ENCODE measurements at regions of chr5 and their contacts with region 1.

Region 1: DNA sequence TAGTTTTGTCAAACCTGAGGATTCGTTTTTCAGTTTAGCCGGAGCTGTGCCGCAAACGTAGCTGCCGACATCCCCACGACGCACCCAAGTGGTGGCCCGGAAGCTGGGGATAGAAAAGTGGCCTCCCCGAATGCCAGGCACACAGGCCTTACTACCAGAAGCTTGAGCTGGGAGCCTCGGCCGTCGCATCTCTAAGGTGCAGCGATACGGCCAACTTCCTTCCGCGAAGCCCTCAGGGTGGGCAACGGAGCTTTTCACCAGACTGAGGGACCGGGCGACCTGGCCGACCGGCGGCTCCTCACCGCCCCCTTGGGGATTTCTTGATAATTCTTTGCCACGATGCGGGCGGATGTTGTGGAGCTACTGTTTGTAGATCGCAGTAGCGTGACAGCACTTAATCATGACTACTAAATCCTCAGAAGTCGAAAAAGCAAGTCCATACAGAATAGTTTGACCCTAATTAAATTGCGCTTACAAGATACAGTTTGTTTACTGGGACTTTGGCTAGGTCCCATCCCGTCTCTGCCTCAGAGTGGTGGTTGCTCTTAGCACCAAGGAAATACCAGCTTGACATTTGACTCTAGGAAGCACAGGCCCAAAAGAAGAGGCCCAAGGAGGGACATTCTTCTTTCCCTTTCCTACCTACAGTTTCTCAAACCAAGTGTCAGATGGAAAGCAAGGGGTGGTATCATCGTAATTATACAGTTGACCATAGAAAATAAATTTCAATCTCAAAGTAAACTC is 613 bp upstream of the TMEM267 start:
- DNase-seq: peak; percentile 85 to 95
- H3K4me3 ChIP-seq: peak overlapping the region; percentile 69
- H3K27ac ChIP-seq: peak overlapping the region; percentile 86
- H3K4me1 ChIP-seq: peaks cover 21% of the 10 kb centered on the region
- H3K27me3 ChIP-seq: no peaks in the 10 kb centered on the region
- CTCF ChIP-seq: peak; percentile 97

Region 2: GRCh38 chr5:42908509-42909488 is 575.5 kb before region 1 on chr5:
- CTCF ChIA-PET with region 1: interaction called, 8 read pairs
- POLR2A ChIA-PET with region 1: interaction called, 3 read pairs
- intact Hi-C with region 1: loop called (anchors 5 kb)
- DNase-seq: peak; percentile 75 to 92
- H3K4me3 ChIP-seq: peak overlapping the region; percentile 28; the same call in 1 of the 2 replicates
- H3K27ac ChIP-seq: no peak overlapping the region
- H3K4me1 ChIP-seq: 0 out of 2 replicates have a peak, but pooled peaks cover 13% of the 10 kb centered on the region
- H3K27me3 ChIP-seq: peaks cover 10% of the 10 kb centered on the region; the same call in 1 of the 2 replicates
- CTCF ChIP-seq: peak; percentile 94

Region 3: DNA sequence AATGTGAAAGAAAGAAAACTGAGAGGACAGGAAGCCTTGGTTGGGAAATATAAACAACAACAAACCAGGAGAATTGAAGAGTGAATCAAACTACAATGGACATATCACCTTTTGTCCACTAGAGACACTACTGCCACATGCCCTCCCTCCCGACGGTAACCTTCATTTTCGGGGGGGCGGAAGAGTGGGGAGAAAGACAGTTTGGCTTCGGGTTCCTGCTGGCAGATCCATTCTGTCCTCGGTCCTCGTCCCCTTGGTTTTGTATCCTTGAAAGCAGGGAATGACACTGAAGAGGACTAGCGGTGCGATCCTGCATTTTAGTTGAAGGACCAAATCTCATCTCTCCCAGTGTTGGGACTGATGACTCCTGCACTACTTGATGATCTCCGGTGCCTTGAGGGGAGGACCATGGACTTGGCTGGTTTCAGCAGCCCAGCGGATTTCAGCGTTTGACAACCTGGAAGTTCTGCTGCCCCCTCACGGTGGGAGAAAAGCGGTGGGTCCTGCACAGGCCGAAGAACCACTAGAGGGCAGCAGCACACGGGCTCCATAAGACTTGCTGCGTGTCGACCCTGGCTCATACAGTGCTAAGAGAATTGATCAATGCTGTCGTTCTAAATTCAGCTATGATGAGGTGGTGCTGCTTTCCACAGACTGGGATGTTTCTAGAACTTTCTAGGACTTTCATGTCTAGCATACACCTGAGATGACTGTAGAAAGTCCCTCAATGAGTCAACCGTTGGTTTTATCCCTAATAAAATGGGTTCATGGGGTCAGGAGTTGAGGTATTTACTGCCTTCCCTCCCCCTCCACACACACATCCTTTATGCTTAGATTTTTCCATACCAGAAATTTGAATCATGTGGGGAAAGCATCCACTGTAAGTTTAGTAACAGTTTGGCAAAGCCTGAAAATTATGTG is 378.6 kb before region 1 on chr5:
- CTCF ChIA-PET with region 1: interaction called, 8 read pairs
- POLR2A ChIA-PET with region 1: no interaction called
- intact Hi-C with region 1: loop called (anchors 1 kb)
- DNase-seq: peak; percentile 90 to 96
- H3K4me3 ChIP-seq: peak overlapping the region; percentile 51
- H3K27ac ChIP-seq: no peak overlapping the region
- H3K4me1 ChIP-seq: peaks cover 8% of the 10 kb centered on the region; the same call in 1 of the 2 replicates
- H3K27me3 ChIP-seq: no peaks in the 10 kb centered on the region
- CTCF ChIP-seq: peak; percentile 100

Region 4: GRCh38 chr5:43305948-43306565 is 178.2 kb before region 1 on chr5:
- CTCF ChIA-PET with region 1: interaction called, 35 read pairs
- POLR2A ChIA-PET with region 1: interaction called, 7 read pairs
- intact Hi-C with region 1: no loop called
- DNase-seq: peak in 1 of 2 experiments; percentile 77
- H3K4me3 ChIP-seq: no peak overlapping the region
- H3K27ac ChIP-seq: no peak overlapping the region
- H3K4me1 ChIP-seq: peaks cover 34% of the 10 kb centered on the region
- H3K27me3 ChIP-seq: no peaks in the 10 kb centered on the region
- CTCF ChIP-seq: peak; percentile 95

Region 5: DNA sequence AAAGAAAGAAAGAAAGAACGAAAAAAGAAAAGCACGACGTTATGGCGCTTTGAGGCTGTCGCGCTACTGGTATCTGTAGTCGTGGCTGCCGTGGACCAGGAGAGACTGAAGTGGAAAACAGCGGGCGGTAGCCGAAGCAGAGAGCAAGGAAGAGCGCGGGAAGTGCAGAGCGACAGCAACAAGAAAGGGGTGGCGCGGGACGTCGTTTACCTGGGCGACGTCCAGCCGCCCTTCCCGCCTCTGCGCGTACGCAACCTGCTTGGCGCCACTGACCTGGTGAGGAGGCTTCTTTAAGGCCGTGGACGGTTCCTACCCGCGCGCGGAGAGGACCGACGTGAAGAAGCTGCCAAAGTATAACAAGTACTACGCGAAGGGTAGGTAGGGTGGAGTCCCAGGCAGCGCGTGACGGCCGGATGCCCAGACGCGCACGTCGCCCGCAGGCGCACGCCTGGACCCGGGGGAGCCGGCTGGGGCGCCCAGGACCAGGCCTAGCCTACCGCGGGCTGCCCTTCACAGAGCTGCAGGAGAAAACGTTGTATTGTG is 87.4 kb before region 1 on chr5:
- CTCF ChIA-PET with region 1: interaction called, 13 read pairs
- POLR2A ChIA-PET with region 1: no interaction called
- intact Hi-C with region 1: loop called (anchors 1 kb)
- DNase-seq: peak in 1 of 2 experiments; percentile 71
- H3K4me3 ChIP-seq: no peak overlapping the region
- H3K27ac ChIP-seq: no peak overlapping the region
- H3K4me1 ChIP-seq: 0 out of 2 replicates have a peak, but pooled peaks cover under 1% of the 10 kb centered on the region
- H3K27me3 ChIP-seq: no peaks in the 10 kb centered on the region
- CTCF ChIP-seq: no peak

Region 6: GRCh38 chr5:43432473-43433365 is 51.6 kb before region 1 on chr5:
- CTCF ChIA-PET with region 1: interaction called, 3 read pairs
- POLR2A ChIA-PET with region 1: interaction called, 5 read pairs
- intact Hi-C with region 1: loop called (anchors 1 kb)
- DNase-seq: peak; percentile 98 to 99
- H3K4me3 ChIP-seq: no peak overlapping the region
- H3K27ac ChIP-seq: peak overlapping the region; percentile 69
- H3K4me1 ChIP-seq: peaks cover 45% of the 10 kb centered on the region
- H3K27me3 ChIP-seq: no peaks in the 10 kb centered on the region
- CTCF ChIP-seq: no peak

Region 7: GRCh38 chr5:43556857-43557542 is 72.7 kb after region 1 on chr5 and contains the start of gene PAIP1:
- CTCF ChIA-PET with region 1: interaction called, 3 read pairs
- POLR2A ChIA-PET with region 1: interaction called, 4 read pairs
- intact Hi-C with region 1: loop called (anchors 1 kb)
- DNase-seq: peak; percentile 86 to 98
- H3K4me3 ChIP-seq: peak within 1 kb of the TSS; percentile 88
- H3K27ac ChIP-seq: peak within 1 kb of the TSS; percentile 76
- H3K4me1 ChIP-seq: peaks cover 34% of the 10 kb centered on the region
- H3K27me3 ChIP-seq: no peaks in the 10 kb centered on the region
- CTCF ChIP-seq: peak; percentile 71
- total RNA-seq, gene PAIP1: 183 and 191 TPM in 2 replicates

Region 8: DNA sequence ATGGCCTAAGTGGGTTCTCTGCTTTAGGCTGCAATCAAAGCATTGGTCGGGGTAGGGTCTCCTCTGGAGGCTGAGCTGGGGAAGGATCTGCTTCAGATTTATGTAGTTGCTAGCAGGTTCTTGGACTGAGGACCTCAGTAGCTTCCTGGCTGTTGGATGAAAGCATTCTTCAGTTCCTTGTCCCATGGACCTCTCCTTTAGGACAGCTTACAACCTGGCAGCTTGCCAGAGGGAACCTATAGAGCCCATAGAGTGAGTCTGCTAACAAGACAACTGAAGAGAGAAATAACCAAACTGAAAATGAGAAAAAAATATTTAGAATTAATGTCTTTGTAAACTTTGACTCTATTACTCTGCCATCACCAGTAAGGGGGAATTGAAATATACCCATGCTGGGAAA is 1336.9 kb after region 1 on chr5:
- CTCF ChIA-PET with region 1: no interaction called
- POLR2A ChIA-PET with region 1: no interaction called
- intact Hi-C with region 1: no loop called
- DNase-seq: no peak
- H3K4me3 ChIP-seq: no peak overlapping the region
- H3K27ac ChIP-seq: no peak overlapping the region
- H3K4me1 ChIP-seq: no peaks in the 10 kb centered on the region
- H3K27me3 ChIP-seq: no peaks in the 10 kb centered on the region
- CTCF ChIP-seq: no peak